ENCODE measurements at regions of chr2 and their contacts with region 1.

Region 1: DNA sequence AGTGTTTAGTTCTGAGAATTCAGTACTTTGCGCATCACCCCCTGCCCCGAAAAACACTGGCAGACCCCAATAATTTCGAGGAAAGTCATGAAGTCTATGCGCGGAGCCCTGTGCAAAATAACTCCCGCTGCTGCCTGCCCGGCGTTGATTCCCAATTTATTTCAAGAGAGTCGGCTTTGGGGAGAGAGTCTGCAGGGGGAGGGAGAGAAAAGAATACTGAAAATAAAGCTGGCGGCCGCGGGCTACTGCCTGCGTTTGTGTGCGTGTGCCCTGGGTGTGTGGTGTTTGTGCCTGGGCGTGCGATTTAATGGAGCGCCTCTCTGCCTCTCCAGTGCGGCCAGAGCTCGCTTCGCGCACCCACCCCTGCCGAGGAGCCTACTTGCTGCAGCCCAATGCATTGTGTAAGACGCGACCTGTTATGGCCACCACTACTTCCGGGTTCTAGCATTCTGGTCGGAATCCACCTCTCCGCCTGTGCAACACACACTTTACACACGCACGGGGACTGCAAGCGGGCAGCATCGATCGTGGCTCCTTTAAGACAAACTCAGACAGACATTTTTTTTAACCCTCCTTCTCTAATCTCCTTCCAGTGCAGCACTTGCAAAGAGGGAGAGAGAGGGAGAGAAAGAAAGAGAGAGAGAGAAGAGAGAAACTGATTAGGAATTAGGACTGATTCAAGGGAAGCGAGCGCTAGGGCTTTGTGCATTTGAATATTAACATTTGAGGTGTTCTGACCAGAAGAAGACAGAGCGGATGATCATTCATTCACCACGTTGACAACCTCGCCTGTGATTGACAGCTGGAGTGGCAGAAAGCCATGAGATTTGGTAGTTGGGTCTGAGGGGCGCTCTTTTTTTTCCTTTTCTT is at the start of gene MEIS1:
- DNase-seq: peak; percentile 92
- H3K4me3 ChIP-seq: peak within 1 kb of the TSS; percentile 47 to 50
- H3K27ac ChIP-seq: peak within 1 kb of the TSS; percentile 87 to 89
- H3K4me1 ChIP-seq: no peaks in the 10 kb centered on the region
- H3K27me3 ChIP-seq: peaks cover 6% of the 10 kb centered on the region
- CTCF ChIP-seq: no peak
- POLR2A ChIP-seq: peak; percentile 88
- total RNA-seq, gene MEIS1: 15.4 to 23.7 TPM

Region 2: GRCh38 chr2:66334237-66335054 is 100.5 kb before region 1 on chr2:
- intact Hi-C with region 1: no loop called
- DNase-seq: no peak
- H3K4me3 ChIP-seq: no peak overlapping the region
- H3K27ac ChIP-seq: no peak overlapping the region
- H3K4me1 ChIP-seq: no peaks in the 10 kb centered on the region
- H3K27me3 ChIP-seq: no peaks in the 10 kb centered on the region
- CTCF ChIP-seq: no peak
- POLR2A ChIP-seq: no peak

Region 3: GRCh38 chr2:66693076-66693965 is 258.4 kb after region 1 on chr2:
- intact Hi-C with region 1: loop called (anchors 2 kb)
- DNase-seq: no peak
- H3K4me3 ChIP-seq: peak overlapping the region in 1 of 2 donors; percentile 20
- H3K27ac ChIP-seq: peak overlapping the region; percentile 31 to 58
- H3K4me1 ChIP-seq: no peaks in the 10 kb centered on the region
- H3K27me3 ChIP-seq: no peaks in the 10 kb centered on the region
- CTCF ChIP-seq: no peak
- POLR2A ChIP-seq: no peak

Region 4: GRCh38 chr2:66888791-66889631 is 454.1 kb after region 1 on chr2:
- intact Hi-C with region 1: loop called (anchors 5 kb)
- DNase-seq: peak; percentile 12
- H3K4me3 ChIP-seq: no peak overlapping the region
- H3K27ac ChIP-seq: peak overlapping the region; percentile 41 to 50
- H3K4me1 ChIP-seq: no peaks in the 10 kb centered on the region
- H3K27me3 ChIP-seq: no peaks in the 10 kb centered on the region
- CTCF ChIP-seq: no peak
- POLR2A ChIP-seq: no peak

Region 5: DNA sequence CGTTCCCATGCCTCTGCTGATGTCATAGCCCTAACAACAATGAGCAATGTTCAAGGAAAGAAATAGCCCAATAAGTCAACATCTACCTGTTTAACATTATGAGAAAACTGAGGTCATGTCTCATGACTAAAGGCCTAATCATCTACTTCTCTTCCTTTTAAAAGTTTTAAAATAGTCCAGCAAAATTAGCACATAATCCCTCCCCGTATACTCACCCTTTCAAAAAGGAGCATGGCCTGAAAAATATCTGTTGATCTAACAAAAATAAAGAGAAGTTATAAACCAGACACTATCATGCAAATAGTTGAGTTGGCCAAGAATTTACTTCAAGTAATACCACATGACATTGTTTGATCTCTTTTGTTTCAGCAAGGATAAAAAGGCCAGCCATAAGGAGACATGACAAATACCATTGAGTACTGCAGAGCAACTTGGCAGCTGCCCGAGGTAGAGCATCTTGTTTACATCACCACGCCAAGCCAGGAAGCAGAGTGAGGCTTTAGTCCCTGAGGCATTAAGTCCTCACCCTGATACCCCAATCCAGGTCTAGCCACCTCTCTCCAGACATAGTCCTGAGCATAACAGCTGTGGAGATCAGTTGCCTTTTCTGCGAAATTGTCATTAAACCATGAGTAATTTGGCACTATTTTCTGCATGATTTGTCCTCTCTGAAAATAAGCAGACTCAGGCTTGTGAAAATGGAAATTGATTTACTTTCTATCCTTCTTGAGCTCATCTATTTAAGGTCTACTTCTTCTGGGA is 824.8 kb after region 1 on chr2:
- intact Hi-C with region 1: loop called (anchors 2 kb)
- DNase-seq: no peak
- H3K4me3 ChIP-seq: no peak overlapping the region
- H3K27ac ChIP-seq: peak overlapping the region; percentile 36 to 53
- H3K4me1 ChIP-seq: no peaks in the 10 kb centered on the region
- H3K27me3 ChIP-seq: no peaks in the 10 kb centered on the region
- CTCF ChIP-seq: no peak
- POLR2A ChIP-seq: no peak

Region 6: DNA sequence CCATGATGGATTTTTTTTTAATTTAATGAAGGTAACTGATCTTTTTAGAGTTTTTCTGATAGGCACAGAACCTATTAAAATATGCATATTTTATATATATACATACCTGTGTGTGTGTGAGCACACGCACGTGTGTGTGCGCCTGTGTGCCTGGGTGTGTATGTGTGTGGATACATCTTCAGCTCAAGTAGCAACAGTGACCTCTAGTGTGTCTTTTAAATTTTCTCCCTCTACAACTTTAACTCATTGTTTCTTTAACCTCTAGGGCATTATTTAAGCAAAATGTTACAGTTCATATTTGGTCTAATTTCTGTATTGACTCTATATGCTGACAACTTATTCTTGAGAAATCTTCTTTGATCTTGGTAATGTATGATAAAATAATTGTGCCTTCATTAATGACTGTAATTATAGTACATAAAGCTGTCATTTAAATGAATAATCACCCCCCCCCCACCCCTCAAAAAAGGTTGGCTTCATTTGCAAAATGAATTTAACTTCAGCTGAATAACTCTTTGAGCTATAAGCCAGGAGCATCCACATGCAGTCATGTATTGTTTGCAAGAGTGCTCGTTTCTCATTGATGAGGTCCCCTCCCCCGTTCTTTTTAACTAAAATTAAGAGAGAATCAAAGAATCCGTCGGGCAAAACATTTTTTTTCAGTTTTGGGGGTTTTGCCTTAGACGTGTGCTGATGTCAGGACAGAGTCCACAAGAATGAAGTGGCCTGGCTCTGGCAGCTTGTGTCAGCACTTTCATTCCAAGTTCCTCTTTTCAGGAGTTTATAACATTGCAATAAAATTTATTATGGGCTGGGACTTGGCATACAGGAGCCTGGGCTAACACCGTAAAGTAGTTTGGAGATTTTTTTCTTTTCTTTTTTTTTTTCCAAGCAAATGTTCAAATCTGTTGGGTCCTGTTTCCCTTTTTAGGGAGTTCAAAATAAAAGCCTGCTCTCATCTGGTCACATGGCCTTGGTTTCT is 1042.2 kb after region 1 on chr2:
- intact Hi-C with region 1: loop called (anchors 10 kb)
- DNase-seq: peak; percentile 61
- H3K4me3 ChIP-seq: no peak overlapping the region
- H3K27ac ChIP-seq: no peak overlapping the region
- H3K4me1 ChIP-seq: no peaks in the 10 kb centered on the region
- H3K27me3 ChIP-seq: peaks cover 4% of the 10 kb centered on the region
- CTCF ChIP-seq: peak; percentile 4 to 47 (median 30)
- POLR2A ChIP-seq: no peak

Measured in prostate gland (tissue), 2 donors.